Ascending aorta (tissue), 2 donors: ENCODE measurements at regions of chr3 and their contacts with region 1.

Region 1: GRCh38 chr3:101676765-101677435 is at the start of gene ZBTB11:
- DNase-seq: peak; percentile 97 to 100
- H3K4me3 ChIP-seq: peak within 1 kb of the TSS; percentile 94 to 95
- H3K27ac ChIP-seq: peak within 1 kb of the TSS; percentile 93 to 95
- H3K4me1 ChIP-seq: peaks cover 5 to 12% of the 10 kb centered on the region in 2 donors
- H3K27me3 ChIP-seq: no peaks in the 10 kb centered on the region
- CTCF ChIP-seq: peak; percentile 40 to 66 (median 45)
- total RNA-seq, gene ZBTB11: 16.5 TPM

Region 2: GRCh38 chr3:100492059-100493006 is 1184.6 kb before region 1 on chr3 and contains the start of gene TMEM45A:
- intact Hi-C with region 1: loop called (anchors 5 kb)
- DNase-seq: peak; percentile 85 to 98
- H3K4me3 ChIP-seq: peak within 1 kb of the TSS; percentile 61 to 73
- H3K27ac ChIP-seq: peak within 1 kb of the TSS; percentile 85 to 89
- H3K4me1 ChIP-seq: peaks cover 0 to 7% of the 10 kb centered on the region in 2 donors
- H3K27me3 ChIP-seq: no peaks in the 10 kb centered on the region
- CTCF ChIP-seq: no peak
- total RNA-seq, gene TMEM45A: 30.9 TPM

Region 3: GRCh38 chr3:101573449-101574387 is 103.2 kb before region 1 on chr3 and contains the start of gene PCNP:
- intact Hi-C with region 1: loop called (anchors 1 kb)
- DNase-seq: peak; percentile 93 to 99
- H3K4me3 ChIP-seq: peak within 1 kb of the TSS; percentile 72 to 99
- H3K27ac ChIP-seq: peak within 1 kb of the TSS; percentile 98 to 99
- H3K4me1 ChIP-seq: peaks cover 11 to 24% of the 10 kb centered on the region in 2 donors
- H3K27me3 ChIP-seq: no peaks in the 10 kb centered on the region
- CTCF ChIP-seq: peak; percentile 84 to 88 (median 86)
- total RNA-seq, gene PCNP: 50.8 TPM

Region 4: DNA sequence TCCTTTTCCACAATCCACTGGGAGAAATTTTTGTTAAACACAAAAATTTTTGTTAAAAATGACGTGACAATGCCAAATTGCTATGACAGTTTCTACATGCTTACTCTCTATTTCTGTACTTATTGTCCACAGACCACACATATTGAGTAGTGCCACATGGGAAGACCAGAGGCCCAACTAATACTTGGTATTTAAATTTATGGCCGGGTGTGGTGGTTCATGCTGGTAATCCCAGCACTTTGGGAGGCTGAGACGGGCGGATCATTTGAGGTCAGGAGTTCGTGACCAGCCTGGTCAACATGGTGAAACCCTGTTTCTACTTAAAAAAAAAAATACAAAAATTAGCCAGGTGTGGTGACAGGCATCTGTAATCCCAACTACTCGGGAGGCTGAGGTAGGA is 20.2 kb before region 1 on chr3:
- intact Hi-C with region 1: no loop called
- DNase-seq: no peak
- H3K4me3 ChIP-seq: no peak overlapping the region
- H3K27ac ChIP-seq: no peak overlapping the region
- H3K4me1 ChIP-seq: peaks cover 0 to 4% of the 10 kb centered on the region in 2 donors
- H3K27me3 ChIP-seq: no peaks in the 10 kb centered on the region
- CTCF ChIP-seq: no peak

Region 5: GRCh38 chr3:101779047-101779821 is 102.3 kb after region 1 on chr3 and contains the start of gene NXPE3:
- intact Hi-C with region 1: loop called (anchors 2 kb)
- DNase-seq: peak; percentile 74 to 97
- H3K4me3 ChIP-seq: peak within 1 kb of the TSS; percentile 75 to 89
- H3K27ac ChIP-seq: peak within 1 kb of the TSS; percentile 94 to 95
- H3K4me1 ChIP-seq: peaks cover 4 to 17% of the 10 kb centered on the region in 2 donors
- H3K27me3 ChIP-seq: no peaks in the 10 kb centered on the region
- CTCF ChIP-seq: peak in 1 of 3 experiments; percentile 7
- total RNA-seq, gene NXPE3: 25.8 TPM